ENCODE measurements at regions of chrX and their contacts with region 1.

Region 1: GRCh38 chrX:85052636-85053343 is 49.1 kb downstream of the APOOL start:
- DNase-seq: no peak
- CTCF ChIP-seq: no peak

Region 2: DNA sequence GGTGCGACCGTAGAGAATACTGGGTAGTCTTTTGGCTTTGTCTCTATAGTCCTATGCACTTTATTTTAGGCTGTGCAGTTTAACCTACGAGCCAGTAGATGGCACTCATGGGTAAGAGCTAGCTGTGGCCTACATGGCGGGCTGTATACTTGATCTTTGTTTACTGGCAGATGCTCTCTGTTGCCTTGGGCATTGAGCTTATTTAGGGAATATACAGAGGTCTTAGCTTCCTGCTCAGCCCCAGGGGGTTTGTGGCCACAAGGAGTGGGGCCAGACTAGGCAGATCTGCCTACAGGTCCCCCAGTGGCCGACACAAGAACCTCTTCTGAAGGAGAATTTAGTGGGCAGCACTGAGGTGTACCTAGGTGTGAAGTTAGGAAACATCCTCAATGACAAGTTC is 323.0 kb before region 1 on chrX:
- CTCF ChIA-PET with region 1: interaction called, 12 read pairs
- POLR2A ChIA-PET with region 1: no interaction called
- DNase-seq: peak; percentile 26
- CTCF ChIP-seq: peak; percentile 62

Region 3: DNA sequence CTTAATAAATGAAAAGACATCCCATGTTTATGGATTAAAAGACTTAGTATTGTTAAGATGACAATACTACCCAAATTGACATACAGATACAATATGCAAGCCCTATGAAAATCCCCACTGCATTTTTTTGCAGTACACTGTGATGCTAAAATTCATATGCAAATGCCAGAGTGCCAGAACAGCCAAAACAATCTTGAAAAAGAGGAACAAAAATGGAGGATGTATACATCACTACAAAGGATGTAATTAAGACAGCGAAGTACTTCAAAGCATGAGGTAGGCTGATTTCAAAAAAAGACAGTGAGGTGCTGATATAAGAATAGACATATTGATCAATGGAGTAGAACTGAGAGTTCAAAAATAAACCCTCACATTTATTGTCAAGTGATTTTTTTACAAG is 143.5 kb after region 1 on chrX:
- CTCF ChIA-PET with region 1: no interaction called
- POLR2A ChIA-PET with region 1: no interaction called
- DNase-seq: no peak
- CTCF ChIP-seq: no peak